ENCODE measurements at regions of chr6 and their contacts with region 1.

Region 1: GRCh38 chr6:142692942-142693341 is 252.0 kb downstream of the HIVEP2 start:
- DNase-seq: peak; percentile 91
- ATAC-seq: peak; percentile 98
- H3K4me3 ChIP-seq: no peak overlapping the region
- H3K27ac ChIP-seq: no peak overlapping the region
- H3K4me1 ChIP-seq: peaks cover 3% of the 10 kb centered on the region
- H3K27me3 ChIP-seq: no peaks in the 10 kb centered on the region
- CTCF ChIP-seq: peak; percentile 95
- POLR2A ChIP-seq: peak; percentile 54; the same call in 1 of the 2 replicates
- RAD21 ChIP-seq: peak; percentile 99

Region 2: GRCh38 chr6:142885182-142885867 is 192.4 kb after region 1 on chr6:
- CTCF ChIA-PET with region 1: no interaction called
- POLR2A ChIA-PET with region 1: no interaction called
- dilution Hi-C with region 1: no loop called
- in situ Hi-C with region 1: no loop called
- intact Hi-C with region 1: loop called (anchors 5 kb)
- DNase-seq: peak; percentile 99
- ATAC-seq: peak; percentile 86
- H3K4me3 ChIP-seq: peak overlapping the region; percentile 39
- H3K27ac ChIP-seq: peak overlapping the region; percentile 78
- H3K4me1 ChIP-seq: peaks cover 9% of the 10 kb centered on the region
- H3K27me3 ChIP-seq: no peaks in the 10 kb centered on the region
- CTCF ChIP-seq: no peak
- POLR2A ChIP-seq: peak; percentile 41; the same call in 1 of the 2 replicates
- RAD21 ChIP-seq: peak; percentile 25; the same call in 1 of the 2 replicates

Region 3: DNA sequence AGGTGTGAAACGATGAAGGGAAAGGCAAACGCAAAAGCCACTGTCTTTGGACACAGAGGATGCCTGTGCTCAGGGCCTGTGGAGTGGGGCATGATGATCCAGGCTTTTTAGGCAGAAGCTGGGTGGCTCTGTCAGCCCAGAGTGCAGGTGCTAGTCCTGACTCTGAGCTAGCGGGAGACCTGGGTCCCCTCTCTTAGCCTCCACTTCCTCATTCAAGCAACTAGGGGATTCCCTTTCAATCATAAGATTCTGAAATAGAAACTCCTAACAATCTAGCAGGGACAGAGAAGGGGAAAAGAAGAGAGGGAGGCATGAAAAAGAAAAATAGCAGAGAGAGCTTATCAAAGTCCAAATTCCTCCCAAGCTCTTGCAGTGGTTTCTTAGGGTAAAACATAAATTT is 259.7 kb after region 1 on chr6:
- CTCF ChIA-PET with region 1: no interaction called
- POLR2A ChIA-PET with region 1: no interaction called
- dilution Hi-C with region 1: no loop called
- in situ Hi-C with region 1: loop called (anchors 5 kb)
- intact Hi-C with region 1: no loop called
- DNase-seq: no peak
- ATAC-seq: no peak
- H3K4me3 ChIP-seq: no peak overlapping the region
- H3K27ac ChIP-seq: no peak overlapping the region
- H3K4me1 ChIP-seq: no peaks in the 10 kb centered on the region
- H3K27me3 ChIP-seq: no peaks in the 10 kb centered on the region
- CTCF ChIP-seq: no peak
- POLR2A ChIP-seq: no peak
- RAD21 ChIP-seq: no peak

Region 4: GRCh38 chr6:143232849-143233248 is 539.9 kb after region 1 on chr6:
- CTCF ChIA-PET with region 1: no interaction called
- POLR2A ChIA-PET with region 1: no interaction called
- dilution Hi-C with region 1: no loop called
- in situ Hi-C with region 1: no loop called
- intact Hi-C with region 1: loop called (anchors 2 kb)
- DNase-seq: peak; percentile 23
- ATAC-seq: no peak
- H3K4me3 ChIP-seq: no peak overlapping the region
- H3K27ac ChIP-seq: no peak overlapping the region
- H3K4me1 ChIP-seq: no peaks in the 10 kb centered on the region
- H3K27me3 ChIP-seq: no peaks in the 10 kb centered on the region
- CTCF ChIP-seq: peak; percentile 49
- POLR2A ChIP-seq: no peak
- RAD21 ChIP-seq: peak; percentile 44

Region 5: GRCh38 chr6:143427109-143427817 is 734.3 kb after region 1 on chr6:
- CTCF ChIA-PET with region 1: interaction called, 16 read pairs
- POLR2A ChIA-PET with region 1: no interaction called
- dilution Hi-C with region 1: no loop called
- in situ Hi-C with region 1: loop called (anchors 5 kb)
- intact Hi-C with region 1: loop called (anchors 1 kb)
- DNase-seq: peak; percentile 86
- ATAC-seq: peak; percentile 100
- H3K4me3 ChIP-seq: no peak overlapping the region
- H3K27ac ChIP-seq: no peak overlapping the region
- H3K4me1 ChIP-seq: peaks cover 2% of the 10 kb centered on the region
- H3K27me3 ChIP-seq: no peaks in the 10 kb centered on the region
- CTCF ChIP-seq: peak; percentile 97
- POLR2A ChIP-seq: peak; percentile 51; the same call in 1 of the 2 replicates
- RAD21 ChIP-seq: peak; percentile 99

Measured in IMR-90 (cell line).